ENCODE measurements at regions of chr17 and their contacts with region 1.

Region 1: GRCh38 chr17:78628547-78629435 is 51.6 kb upstream of the DNAH17 start:
- DNase-seq: no peak
- ATAC-seq: no peak
- H3K4me3 ChIP-seq: no peak overlapping the region
- H3K4me3 Mint-ChIP-seq: no peak overlapping the region
- H3K27ac ChIP-seq: no peak overlapping the region
- H3K27ac Mint-ChIP-seq: no peak overlapping the region
- H3K4me1 ChIP-seq: peaks cover 0 to 13% of the 10 kb centered on the region in 2 donors
- H3K4me1 Mint-ChIP-seq: peaks cover 15% of the 10 kb centered on the region
- H3K27me3 ChIP-seq: no peaks in the 10 kb centered on the region
- H3K27me3 Mint-ChIP-seq: peaks cover 7% of the 10 kb centered on the region
- CTCF ChIP-seq: no peak

Region 2: DNA sequence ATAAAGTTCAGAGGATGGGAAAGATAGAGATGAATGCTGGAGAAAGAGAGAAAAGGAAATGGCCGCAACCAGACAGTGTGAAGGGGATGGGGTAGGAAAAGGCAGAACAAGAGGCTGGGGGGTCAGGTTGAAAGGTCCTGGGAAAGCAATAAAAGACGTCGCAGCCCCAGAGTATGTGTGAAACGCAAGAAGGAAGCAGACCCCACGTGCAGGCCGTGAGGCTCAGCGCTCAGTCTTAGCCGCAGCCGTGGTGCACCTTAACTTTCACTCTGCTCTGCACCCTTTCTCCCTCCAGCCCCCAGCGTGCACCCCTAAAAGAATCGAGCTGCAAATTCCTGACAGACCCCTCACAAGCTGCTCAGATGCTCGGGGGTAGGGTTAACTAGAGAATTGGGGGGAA is 53.5 kb before region 1 on chr17:
- CTCF ChIA-PET with region 1: no interaction called
- POLR2A ChIA-PET with region 1: interaction called, 14 read pairs
- intact Hi-C with region 1: no loop called
- DNase-seq: no peak
- ATAC-seq: no peak
- H3K4me3 ChIP-seq: no peak overlapping the region
- H3K4me3 Mint-ChIP-seq: no peak overlapping the region
- H3K27ac ChIP-seq: no peak overlapping the region
- H3K27ac Mint-ChIP-seq: no peak overlapping the region
- H3K4me1 ChIP-seq: peaks cover 0 to 16% of the 10 kb centered on the region in 2 donors
- H3K4me1 Mint-ChIP-seq: peaks cover 8% of the 10 kb centered on the region
- H3K27me3 ChIP-seq: no peaks in the 10 kb centered on the region
- H3K27me3 Mint-ChIP-seq: peaks cover 5% of the 10 kb centered on the region
- CTCF ChIP-seq: no peak